ENCODE measurements at regions of chr12 and their contacts with region 1.

Region 1: GRCh38 chr12:6607751-6608591 is 792 bp upstream of the CHD4 start:
- DNase-seq: no peak
- ATAC-seq: peak; percentile 31
- H3K4me3 Mint-ChIP-seq: no peak overlapping the region
- H3K27ac Mint-ChIP-seq: no peak overlapping the region
- H3K4me1 Mint-ChIP-seq: peaks cover 64% of the 10 kb centered on the region
- H3K27me3 Mint-ChIP-seq: no peaks in the 10 kb centered on the region
- CTCF ChIP-seq: no peak

Region 2: GRCh38 chr12:6563448-6564050 is 44.4 kb before region 1 on chr12:
- CTCF ChIA-PET with region 1: interaction called, 4 read pairs
- POLR2A ChIA-PET with region 1: interaction called, 14 read pairs
- intact Hi-C with region 1: loop called (anchors 1 kb)
- DNase-seq: peak; percentile 57
- ATAC-seq: peak; percentile 25
- H3K4me3 Mint-ChIP-seq: no peak overlapping the region
- H3K27ac Mint-ChIP-seq: no peak overlapping the region
- H3K4me1 Mint-ChIP-seq: peaks cover 29% of the 10 kb centered on the region
- H3K27me3 Mint-ChIP-seq: no peaks in the 10 kb centered on the region
- CTCF ChIP-seq: peak; percentile 57

Region 3: GRCh38 chr12:6632026-6632983 is 24.3 kb after region 1 on chr12:
- CTCF ChIA-PET with region 1: interaction called, 4 read pairs
- POLR2A ChIA-PET with region 1: interaction called, 31 read pairs
- intact Hi-C with region 1: loop called (anchors 1 kb)
- DNase-seq: peak; percentile 51
- ATAC-seq: peak; percentile 53
- H3K4me3 Mint-ChIP-seq: peak overlapping the region; percentile 86
- H3K27ac Mint-ChIP-seq: peak overlapping the region; percentile 98
- H3K4me1 Mint-ChIP-seq: peaks cover 84% of the 10 kb centered on the region
- H3K27me3 Mint-ChIP-seq: no peaks in the 10 kb centered on the region
- CTCF ChIP-seq: no peak

Region 4: DNA sequence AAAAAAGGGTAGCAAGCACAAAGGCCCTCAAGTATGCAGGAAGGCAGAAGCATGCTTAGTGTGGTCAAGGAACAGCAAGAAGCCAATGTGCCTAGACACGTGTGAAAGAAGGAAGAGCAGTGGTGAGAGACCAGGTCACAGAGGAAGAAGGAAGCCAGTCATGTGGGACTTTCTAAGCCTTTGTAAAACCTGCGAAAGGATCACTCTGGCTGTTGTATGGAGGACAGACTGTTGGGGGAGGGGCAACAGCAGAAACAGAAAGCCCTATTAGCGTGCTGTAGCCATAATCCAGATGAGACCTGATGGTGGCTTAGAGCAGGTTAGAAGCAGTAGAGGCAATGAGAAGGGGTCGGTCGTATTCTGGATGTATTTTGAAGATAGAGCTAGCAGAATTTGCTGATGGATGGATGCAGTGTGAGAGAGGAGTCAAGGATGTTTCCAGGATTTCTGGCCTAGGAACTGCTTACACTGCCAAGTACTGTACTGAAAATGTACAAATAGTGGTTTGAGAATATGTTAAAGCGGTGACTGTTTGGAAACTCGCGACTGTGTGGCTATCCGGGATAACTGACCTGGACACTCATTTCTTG is 150.6 kb after region 1 on chr12:
- CTCF ChIA-PET with region 1: interaction called, 3 read pairs
- POLR2A ChIA-PET with region 1: interaction called, 17 read pairs
- intact Hi-C with region 1: loop called (anchors 1 kb)
- DNase-seq: no peak
- ATAC-seq: no peak
- H3K4me3 Mint-ChIP-seq: no peak overlapping the region
- H3K27ac Mint-ChIP-seq: no peak overlapping the region
- H3K4me1 Mint-ChIP-seq: peaks cover 9% of the 10 kb centered on the region
- H3K27me3 Mint-ChIP-seq: peaks cover 2% of the 10 kb centered on the region
- CTCF ChIP-seq: no peak

Region 5: DNA sequence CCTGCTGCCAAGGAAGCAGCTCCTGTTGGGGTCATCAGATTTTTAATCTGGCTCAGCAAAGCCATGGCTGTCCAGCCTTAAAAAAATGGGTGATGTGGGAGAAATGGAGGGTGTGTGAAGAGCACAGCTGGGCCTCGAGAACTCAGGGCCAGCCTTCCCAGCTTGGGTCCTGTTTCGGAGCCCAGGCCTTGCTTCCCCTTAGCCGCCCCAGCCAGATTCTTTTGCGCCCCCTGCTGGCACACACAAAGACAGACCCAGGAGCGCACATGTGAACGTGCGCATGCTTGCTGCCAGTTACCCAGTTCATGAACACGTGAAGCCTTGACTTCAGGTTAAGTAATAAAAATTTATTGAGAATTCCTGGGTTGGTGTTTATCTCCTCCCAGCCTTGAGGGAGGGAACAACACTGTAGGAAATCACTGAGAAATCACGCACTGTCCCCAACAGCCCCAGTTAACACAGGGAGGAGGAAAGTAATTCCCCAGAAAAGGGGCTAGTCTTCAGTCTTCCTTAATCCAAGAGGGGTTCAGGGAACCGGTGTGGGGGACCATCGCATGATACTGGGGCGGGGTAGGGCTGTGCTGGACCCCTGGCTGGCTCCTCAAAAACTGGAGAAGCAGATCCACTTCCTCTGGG is 357.2 kb after region 1 on chr12:
- CTCF ChIA-PET with region 1: no interaction called
- POLR2A ChIA-PET with region 1: interaction called, 3 read pairs
- intact Hi-C with region 1: loop called (anchors 5 kb)
- DNase-seq: peak; percentile 76
- ATAC-seq: peak; percentile 64
- H3K4me3 Mint-ChIP-seq: peak overlapping the region; percentile 11
- H3K27ac Mint-ChIP-seq: peak overlapping the region; percentile 86
- H3K4me1 Mint-ChIP-seq: peaks cover 69% of the 10 kb centered on the region
- H3K27me3 Mint-ChIP-seq: no peaks in the 10 kb centered on the region
- CTCF ChIP-seq: no peak